Activated CD8-positive, alpha-beta memory T cell treated with anti-CD3 and anti-CD28 coated beads, Interleukin-2, amount 10 ng/mL, durations not matched to agents 7 days and 5 days (primary cell): ENCODE measurements at regions of chr13 and their contacts with region 1.

Region 1: GRCh38 chr13:43085545-43085944 is 62.2 kb downstream of the DNAJC15 start:
- DNase-seq: no peak
- ATAC-seq: no peak
- H3K4me3 Mint-ChIP-seq: no peak overlapping the region
- H3K27ac Mint-ChIP-seq: no peak overlapping the region
- H3K4me1 Mint-ChIP-seq: peaks cover 16% of the 10 kb centered on the region
- H3K27me3 Mint-ChIP-seq: no peaks in the 10 kb centered on the region

Region 2: DNA sequence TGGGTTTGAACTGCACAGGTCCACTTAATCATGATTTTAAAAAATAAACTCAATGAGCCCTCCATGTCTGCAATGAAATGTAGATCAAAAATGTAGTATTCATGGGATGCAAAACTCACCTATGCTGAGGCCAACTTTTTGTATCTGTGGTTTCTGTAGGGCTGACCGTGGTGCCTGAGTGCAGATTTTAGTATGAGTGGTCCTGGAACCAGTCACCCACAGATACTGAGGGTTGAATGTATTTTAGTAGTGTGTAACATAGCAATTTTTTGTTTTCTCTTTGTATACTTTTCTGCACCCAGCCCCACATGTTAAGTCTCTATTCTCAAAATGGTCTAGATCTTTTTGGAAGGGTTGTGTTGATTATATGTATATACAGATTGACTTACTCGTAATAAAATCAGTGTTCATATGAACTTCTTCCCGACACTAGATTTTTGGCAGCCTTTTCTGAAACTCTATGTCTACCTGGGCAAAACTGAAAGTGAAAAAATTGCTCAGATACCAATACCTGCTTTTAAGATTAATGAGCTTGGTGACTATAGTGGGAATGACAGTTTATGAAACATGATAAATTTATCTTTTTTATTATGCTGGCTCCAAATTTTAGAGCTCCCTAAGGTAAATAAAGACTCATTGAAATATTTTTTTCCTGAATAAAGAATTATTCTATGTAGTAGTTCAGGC is 10.6 kb before region 1 on chr13:
- CTCF ChIA-PET with region 1: interaction called, 22 read pairs
- DNase-seq: peak; percentile 69
- ATAC-seq: peak; percentile 81
- H3K4me3 Mint-ChIP-seq: peak overlapping the region; percentile 44
- H3K27ac Mint-ChIP-seq: peak overlapping the region; percentile 76
- H3K4me1 Mint-ChIP-seq: peaks cover 44% of the 10 kb centered on the region
- H3K27me3 Mint-ChIP-seq: no peaks in the 10 kb centered on the region

Region 3: GRCh38 chr13:43119206-43119605 is 33.7 kb after region 1 on chr13:
- CTCF ChIA-PET with region 1: no interaction called
- DNase-seq: no peak
- ATAC-seq: no peak
- H3K4me3 Mint-ChIP-seq: no peak overlapping the region
- H3K27ac Mint-ChIP-seq: no peak overlapping the region
- H3K4me1 Mint-ChIP-seq: no peaks in the 10 kb centered on the region
- H3K27me3 Mint-ChIP-seq: peaks cover 7% of the 10 kb centered on the region